B cell (primary cell): ENCODE measurements at regions of chr11 and their contacts with region 1.

Region 1: DNA sequence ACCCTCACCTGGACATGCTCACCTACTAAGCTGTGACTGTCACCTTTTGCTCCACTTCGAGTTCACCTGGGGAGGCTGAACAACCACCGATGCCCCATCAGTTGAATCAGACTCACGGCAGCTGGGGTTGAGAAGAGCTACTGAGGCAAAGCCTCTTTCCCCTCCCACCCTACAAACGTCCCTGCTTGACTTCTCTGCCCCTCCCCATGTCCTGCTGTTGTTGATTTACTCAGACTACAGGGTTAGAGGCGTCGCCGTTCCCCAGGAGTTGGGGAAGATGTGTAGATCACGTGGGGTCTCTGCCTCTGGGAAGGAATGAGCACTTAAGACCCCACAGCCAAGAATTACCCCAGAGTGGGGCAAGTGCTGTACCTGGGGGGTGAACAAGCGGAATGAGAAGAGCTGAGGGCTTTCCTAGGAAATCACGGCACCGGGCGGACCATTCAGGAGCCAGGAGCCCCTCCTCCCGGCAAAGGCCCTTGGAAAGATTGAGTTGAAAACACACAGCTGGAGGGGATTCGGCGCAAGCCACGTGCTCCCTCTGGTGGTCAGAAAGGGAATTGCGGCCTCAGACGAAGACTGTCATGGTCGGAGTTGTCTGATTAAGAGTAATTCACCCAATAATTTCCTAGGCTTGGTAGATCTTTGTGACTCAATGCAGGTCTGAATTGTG is 7.0 kb downstream of the FXYD2 start:
- DNase-seq: peak; percentile 89
- ATAC-seq: peak; percentile 11
- H3K4me3 ChIP-seq: peak overlapping the region in 4 of 5 experiments; percentile 2 to 62 (median 50)
- H3K4me3 Mint-ChIP-seq: peak overlapping the region; percentile 89
- H3K27ac ChIP-seq: peak overlapping the region in 1 of 2 donors; percentile 91
- H3K27ac Mint-ChIP-seq: peak overlapping the region; percentile 93
- H3K4me1 ChIP-seq: peaks cover 46 to 58% of the 10 kb centered on the region in 2 donors
- H3K4me1 Mint-ChIP-seq: peaks cover 55% of the 10 kb centered on the region
- H3K27me3 ChIP-seq: peaks cover 0 to 11% (median 2%) of the 10 kb centered on the region in 4 experiments
- H3K27me3 Mint-ChIP-seq: peaks cover 10% of the 10 kb centered on the region
- CTCF ChIP-seq: peak; percentile 98

Region 2: DNA sequence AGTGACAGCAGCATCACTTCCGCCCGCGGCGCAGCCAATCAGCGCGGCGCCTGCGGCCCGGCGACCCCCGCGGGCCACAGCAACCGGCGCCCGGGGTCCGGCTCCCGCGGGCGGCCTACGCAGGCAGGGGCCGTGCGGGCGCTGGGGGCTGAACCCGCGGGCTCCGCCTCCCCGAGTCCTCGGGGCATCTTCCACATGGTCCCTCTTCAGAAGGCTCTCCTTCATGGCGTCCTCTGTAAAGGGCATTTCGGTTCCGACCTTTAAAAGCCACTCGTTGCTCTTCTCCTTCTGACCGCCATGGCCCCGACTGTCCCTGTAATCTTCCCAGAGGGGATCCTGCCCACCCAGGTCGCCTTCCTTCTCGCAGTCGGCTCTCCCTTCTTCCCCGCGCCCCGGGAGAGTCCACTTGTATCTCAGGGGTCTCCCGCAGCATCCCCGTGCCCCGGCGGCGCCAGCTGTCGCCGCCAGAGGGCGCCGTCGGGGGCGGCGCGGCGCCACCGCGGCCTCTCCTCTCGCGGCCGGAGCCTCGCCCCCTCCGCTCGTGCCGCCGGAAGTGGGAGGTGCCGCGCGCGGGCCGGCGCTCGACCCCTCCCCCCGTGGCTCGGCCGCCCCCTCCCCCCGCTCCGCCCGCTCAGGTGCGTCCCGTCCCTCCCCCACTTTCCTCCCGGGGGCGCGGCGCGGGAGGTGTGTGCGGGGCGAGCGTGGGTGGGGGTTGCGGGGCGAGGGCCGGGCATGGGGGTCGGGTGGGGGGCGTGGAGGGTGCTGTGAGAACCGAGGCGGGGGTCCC is 585.2 kb before region 1 on chr11 and contains the start of gene RNF214:
- CTCF ChIA-PET with region 1: no interaction called
- POLR2A ChIA-PET with region 1: no interaction called
- intact Hi-C with region 1: loop called (anchors 5 kb)
- DNase-seq: peak; percentile 89
- ATAC-seq: peak; percentile 78
- H3K4me3 ChIP-seq: peak within 1 kb of the TSS; percentile 64 to 99 (median 91)
- H3K4me3 Mint-ChIP-seq: peak within 1 kb of the TSS; percentile 95
- H3K27ac ChIP-seq: peak within 1 kb of the TSS; percentile 82 to 84
- H3K27ac Mint-ChIP-seq: peak within 1 kb of the TSS; percentile 99
- H3K4me1 ChIP-seq: peaks cover 34 to 38% of the 10 kb centered on the region in 2 donors
- H3K4me1 Mint-ChIP-seq: peaks cover 48% of the 10 kb centered on the region
- H3K27me3 ChIP-seq: no peaks in the 10 kb centered on the region
- H3K27me3 Mint-ChIP-seq: no peaks in the 10 kb centered on the region
- CTCF ChIP-seq: peak; percentile 83
- total RNA-seq, gene RNF214: 33.6 and 36.1 TPM in 2 replicates

Region 3: DNA sequence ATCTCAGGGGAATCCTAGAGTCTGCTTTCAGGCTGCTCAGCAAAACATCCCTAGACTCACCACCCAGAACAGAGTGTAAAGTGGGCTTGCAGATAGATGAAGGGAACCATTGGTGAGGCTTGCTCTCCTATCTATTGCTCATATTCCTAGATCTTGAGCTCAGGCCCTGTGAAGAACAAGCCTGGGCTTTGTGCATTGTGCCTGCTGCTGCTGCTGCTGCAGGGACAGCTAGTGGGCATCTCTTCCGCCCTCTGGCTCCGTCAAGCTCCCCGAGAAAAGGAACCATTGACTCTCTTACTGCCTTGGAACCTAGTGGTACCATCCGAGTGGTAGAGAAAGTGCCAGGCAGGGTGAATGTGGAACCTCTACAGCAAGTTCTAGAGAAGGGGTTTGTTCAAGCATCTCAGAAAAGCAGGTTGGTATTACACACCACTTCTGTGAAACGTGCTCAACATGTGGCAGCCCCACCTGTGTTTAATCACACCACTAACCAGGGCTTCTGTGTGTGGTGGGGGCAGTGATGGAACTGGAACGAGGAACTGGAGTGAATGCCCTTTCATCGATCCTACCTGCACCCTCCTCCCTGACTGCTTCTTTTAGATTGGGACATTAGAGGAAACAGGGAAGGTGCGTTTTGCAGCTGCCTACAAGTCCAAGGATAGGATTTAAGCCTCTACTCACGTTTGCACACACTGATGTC is 521.9 kb before region 1 on chr11:
- CTCF ChIA-PET with region 1: no interaction called
- POLR2A ChIA-PET with region 1: no interaction called
- intact Hi-C with region 1: no loop called
- DNase-seq: no peak
- ATAC-seq: no peak
- H3K4me3 ChIP-seq: no peak overlapping the region
- H3K4me3 Mint-ChIP-seq: no peak overlapping the region
- H3K27ac ChIP-seq: no peak overlapping the region
- H3K27ac Mint-ChIP-seq: no peak overlapping the region
- H3K4me1 ChIP-seq: no peaks in the 10 kb centered on the region
- H3K4me1 Mint-ChIP-seq: no peaks in the 10 kb centered on the region
- H3K27me3 ChIP-seq: no peaks in the 10 kb centered on the region
- H3K27me3 Mint-ChIP-seq: no peaks in the 10 kb centered on the region
- CTCF ChIP-seq: no peak

Region 4: DNA sequence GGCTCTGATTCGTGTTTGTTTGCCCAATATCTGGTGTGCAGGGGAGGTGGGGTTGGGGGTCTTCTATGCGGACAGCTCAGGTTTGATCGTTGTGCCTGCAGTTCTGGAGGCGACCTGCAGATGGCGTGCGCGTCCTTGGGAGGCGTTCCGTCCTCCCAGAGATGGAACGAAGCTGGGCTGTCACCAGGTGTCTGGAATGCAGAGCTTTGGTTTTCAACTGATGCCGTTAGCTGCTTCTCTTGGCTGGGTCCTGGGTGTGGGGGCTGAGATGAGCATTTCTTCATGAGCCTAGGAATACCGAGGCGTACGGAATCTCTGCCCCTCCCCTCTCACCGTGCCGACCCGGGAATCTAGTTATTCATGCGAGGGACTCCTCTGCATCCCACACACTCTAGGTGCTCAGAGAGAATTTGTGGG is 391.2 kb before region 1 on chr11:
- CTCF ChIA-PET with region 1: interaction called, 54 read pairs
- POLR2A ChIA-PET with region 1: no interaction called
- intact Hi-C with region 1: loop called (anchors 2 kb)
- DNase-seq: peak; percentile 65
- ATAC-seq: peak; percentile 49
- H3K4me3 ChIP-seq: no peak overlapping the region
- H3K4me3 Mint-ChIP-seq: no peak overlapping the region
- H3K27ac ChIP-seq: no peak overlapping the region
- H3K27ac Mint-ChIP-seq: peak overlapping the region; percentile 37
- H3K4me1 ChIP-seq: peaks cover 0 to 8% of the 10 kb centered on the region in 2 donors
- H3K4me1 Mint-ChIP-seq: peaks cover 8% of the 10 kb centered on the region
- H3K27me3 ChIP-seq: peaks cover 0 to 13% (median 0%) of the 10 kb centered on the region in 4 experiments
- H3K27me3 Mint-ChIP-seq: peaks cover 5% of the 10 kb centered on the region
- CTCF ChIP-seq: peak; percentile 97

Region 5: GRCh38 chr11:117843666-117844484 is 26.4 kb after region 1 on chr11:
- CTCF ChIA-PET with region 1: interaction called, 11 read pairs
- POLR2A ChIA-PET with region 1: no interaction called
- intact Hi-C with region 1: no loop called
- DNase-seq: peak; percentile 84
- ATAC-seq: peak; percentile 93
- H3K4me3 ChIP-seq: no peak overlapping the region
- H3K4me3 Mint-ChIP-seq: no peak overlapping the region
- H3K27ac ChIP-seq: no peak overlapping the region
- H3K27ac Mint-ChIP-seq: no peak overlapping the region
- H3K4me1 ChIP-seq: peaks cover 0 to 3% of the 10 kb centered on the region in 2 donors
- H3K4me1 Mint-ChIP-seq: no peaks in the 10 kb centered on the region
- H3K27me3 ChIP-seq: no peaks in the 10 kb centered on the region
- H3K27me3 Mint-ChIP-seq: peaks cover 5% of the 10 kb centered on the region
- CTCF ChIP-seq: peak; percentile 99

Region 6: GRCh38 chr11:118010738-118011461 is 193.4 kb after region 1 on chr11:
- CTCF ChIA-PET with region 1: interaction called, 8 read pairs
- POLR2A ChIA-PET with region 1: interaction called, 6 read pairs
- intact Hi-C with region 1: loop called (anchors 1 kb)
- DNase-seq: peak; percentile 96
- ATAC-seq: peak; percentile 73
- H3K4me3 ChIP-seq: peak overlapping the region in 2 of 5 experiments; percentile 2 to 38
- H3K4me3 Mint-ChIP-seq: peak overlapping the region; percentile 75
- H3K27ac ChIP-seq: peak overlapping the region; percentile 95 to 99
- H3K27ac Mint-ChIP-seq: peak overlapping the region; percentile 99
- H3K4me1 ChIP-seq: peaks cover 99 to 100% of the 10 kb centered on the region in 2 donors
- H3K4me1 Mint-ChIP-seq: peaks cover 100% of the 10 kb centered on the region
- H3K27me3 ChIP-seq: no peaks in the 10 kb centered on the region
- H3K27me3 Mint-ChIP-seq: no peaks in the 10 kb centered on the region
- CTCF ChIP-seq: no peak

Region 7: GRCh38 chr11:118109231-118109630 is 291.7 kb after region 1 on chr11:
- CTCF ChIA-PET with region 1: no interaction called
- POLR2A ChIA-PET with region 1: no interaction called
- intact Hi-C with region 1: no loop called
- DNase-seq: no peak
- ATAC-seq: no peak
- H3K4me3 ChIP-seq: no peak overlapping the region
- H3K4me3 Mint-ChIP-seq: no peak overlapping the region
- H3K27ac ChIP-seq: no peak overlapping the region
- H3K27ac Mint-ChIP-seq: no peak overlapping the region
- H3K4me1 ChIP-seq: no peaks in the 10 kb centered on the region
- H3K4me1 Mint-ChIP-seq: no peaks in the 10 kb centered on the region
- H3K27me3 ChIP-seq: peaks cover 0 to 4% (median 0%) of the 10 kb centered on the region in 4 experiments
- H3K27me3 Mint-ChIP-seq: peaks cover 25% of the 10 kb centered on the region
- CTCF ChIP-seq: no peak

Region 8: GRCh38 chr11:118435893-118436624 is 618.6 kb after region 1 on chr11 and contains the start of gene KMT2A:
- CTCF ChIA-PET with region 1: no interaction called
- POLR2A ChIA-PET with region 1: interaction called, 6 read pairs
- intact Hi-C with region 1: loop called (anchors 5 kb)
- DNase-seq: peak; percentile 98
- ATAC-seq: peak; percentile 67
- H3K4me3 ChIP-seq: peak within 1 kb of the TSS; percentile 80 to 93 (median 87)
- H3K4me3 Mint-ChIP-seq: peak within 1 kb of the TSS; percentile 97
- H3K27ac ChIP-seq: peak within 1 kb of the TSS; percentile 83 to 94
- H3K27ac Mint-ChIP-seq: peak within 1 kb of the TSS; percentile 99
- H3K4me1 ChIP-seq: peaks cover 24 to 31% of the 10 kb centered on the region in 2 donors
- H3K4me1 Mint-ChIP-seq: peaks cover 42% of the 10 kb centered on the region
- H3K27me3 ChIP-seq: no peaks in the 10 kb centered on the region
- H3K27me3 Mint-ChIP-seq: no peaks in the 10 kb centered on the region
- CTCF ChIP-seq: no peak
- total RNA-seq, gene KMT2A: 175 and 198 TPM in 2 replicates